HCT116 (cell line): ENCODE measurements at regions of chr1 and their contacts with region 1.

Region 1: DNA sequence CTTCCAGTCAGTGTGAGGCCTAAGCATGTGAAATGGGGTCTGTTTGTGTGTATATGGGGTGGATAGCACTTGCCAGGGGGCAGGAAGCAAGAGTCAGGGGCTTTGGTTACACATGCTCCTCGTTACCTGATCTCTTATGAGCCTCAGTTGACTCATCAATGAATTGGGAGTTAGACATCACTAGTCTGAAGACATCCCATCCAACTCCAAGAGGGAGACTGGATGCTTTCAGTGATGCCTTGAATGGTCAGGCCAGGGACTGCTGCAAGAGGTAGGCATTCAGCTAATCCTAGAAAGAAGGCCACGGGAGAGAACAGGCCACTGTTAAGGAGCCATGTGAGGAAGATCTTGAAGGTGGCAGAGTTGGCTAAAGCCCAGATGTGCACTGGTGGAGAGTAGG is 6.3 kb downstream of the RAB25 start:
- DNase-seq: no peak
- ATAC-seq: no peak
- H3K4me3 ChIP-seq: no peak overlapping the region
- H3K27ac ChIP-seq: no peak overlapping the region
- H3K4me1 ChIP-seq: peaks cover 0 to 8% of the 10 kb centered on the region in 2 experiments; a peak in 1 of 4 replicates
- H3K27me3 ChIP-seq: no peaks in the 10 kb centered on the region
- CTCF ChIP-seq: no peak
- POLR2A ChIP-seq: no peak
- RAD21 ChIP-seq: no peak

Region 2: DNA sequence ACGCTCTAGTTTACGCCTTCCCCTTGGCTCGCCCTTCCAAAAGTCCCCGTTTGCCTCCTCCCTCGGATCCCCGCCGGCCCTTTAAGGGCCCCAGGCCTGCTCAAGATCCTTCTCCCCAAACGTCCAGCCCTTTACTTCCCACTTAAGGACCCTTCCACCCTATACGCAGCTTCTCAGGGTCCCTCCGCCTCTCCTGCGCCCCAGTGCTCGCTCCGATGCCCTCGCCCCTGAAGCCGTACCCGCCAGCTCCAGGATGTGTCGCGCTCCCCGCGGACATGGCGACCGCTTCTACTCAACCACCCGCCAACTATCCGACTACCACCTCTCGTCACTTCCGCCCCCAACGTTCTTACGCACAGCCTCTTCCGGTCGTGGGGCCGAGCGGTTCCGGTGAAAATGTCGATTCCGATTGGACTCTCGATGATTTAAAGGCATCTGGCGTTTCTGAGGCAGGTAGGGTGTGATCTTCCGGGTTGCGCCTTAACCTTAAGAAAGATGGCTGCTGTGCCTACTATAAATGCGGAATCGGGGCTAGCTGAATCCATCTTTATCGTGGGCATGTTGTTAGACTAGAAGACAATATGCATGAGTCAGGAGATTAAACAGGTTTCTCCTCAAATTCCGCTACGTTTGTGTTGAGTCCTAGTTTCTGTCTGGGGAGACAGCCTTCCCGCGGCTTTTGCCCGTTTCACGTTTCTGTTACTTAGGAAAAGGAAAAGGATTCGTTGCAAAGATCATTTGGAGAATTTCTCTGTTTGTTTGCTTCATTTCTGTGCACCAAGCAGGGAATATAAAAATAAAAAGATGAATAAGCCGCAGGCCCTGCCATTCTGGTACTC is 132.9 kb before region 1 on chr1 and contains the start of gene KHDC4:
- CTCF ChIA-PET with region 1: interaction called, 31 read pairs
- POLR2A ChIA-PET with region 1: interaction called, 3 read pairs
- RAD21 ChIA-PET with region 1: interaction called in 1 of 2 experiments, 3 read pairs
- intact Hi-C with region 1: no loop called
- DNase-seq: peak; percentile 98
- ATAC-seq: peak; percentile 89
- H3K4me3 ChIP-seq: peak within 1 kb of the TSS; percentile 99
- H3K27ac ChIP-seq: peak within 1 kb of the TSS; percentile 67
- H3K4me1 ChIP-seq: peaks cover 23 to 42% of the 10 kb centered on the region in 2 experiments
- H3K27me3 ChIP-seq: no peaks in the 10 kb centered on the region
- CTCF ChIP-seq: 0 out of 6 replicates have a peak, but pooled peaks of 1 of the 3 experiments have one; percentile 6
- POLR2A ChIP-seq: peak; percentile 81
- RAD21 ChIP-seq: no peak
- total RNA-seq, gene KHDC4: 60.7 TPM

Region 3: GRCh38 chr1:155940531-155940992 is 126.7 kb before region 1 on chr1:
- CTCF ChIA-PET with region 1: interaction called, 31 read pairs
- POLR2A ChIA-PET with region 1: interaction called, 3 read pairs
- RAD21 ChIA-PET with region 1: interaction called, 3 read pairs
- intact Hi-C with region 1: loop called (anchors 1 kb)
- DNase-seq: no peak
- ATAC-seq: peak; percentile 68
- H3K4me3 ChIP-seq: peak overlapping the region; percentile 24 to 40
- H3K27ac ChIP-seq: peak overlapping the region; percentile 96
- H3K4me1 ChIP-seq: peaks cover 49 to 67% of the 10 kb centered on the region in 2 experiments
- H3K27me3 ChIP-seq: no peaks in the 10 kb centered on the region
- CTCF ChIP-seq: no peak
- POLR2A ChIP-seq: peak; percentile 31
- RAD21 ChIP-seq: no peak

Region 4: DNA sequence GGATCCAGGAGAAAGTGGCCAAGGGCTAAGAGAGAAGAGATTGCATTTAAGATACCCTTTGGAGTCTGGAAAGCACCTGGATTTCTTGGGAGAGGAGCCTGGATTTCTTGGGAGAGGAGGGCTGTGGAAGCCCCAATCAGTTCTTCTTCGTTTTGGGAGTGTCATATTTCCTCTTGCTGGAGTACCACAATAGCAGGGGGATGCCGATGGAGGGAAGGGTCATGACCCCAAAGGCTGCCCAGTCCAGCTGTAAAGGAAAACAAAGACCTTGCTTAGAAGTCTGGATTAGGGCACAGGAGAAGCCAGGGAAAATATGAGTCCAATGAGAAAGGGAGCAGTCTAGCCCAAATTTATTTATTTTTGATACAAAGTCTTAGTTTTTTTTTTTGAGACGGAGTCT is 57.9 kb before region 1 on chr1:
- CTCF ChIA-PET with region 1: interaction called, 14 read pairs
- POLR2A ChIA-PET with region 1: no interaction called
- RAD21 ChIA-PET with region 1: no interaction called
- intact Hi-C with region 1: loop called (anchors 10 kb)
- DNase-seq: no peak
- ATAC-seq: no peak
- H3K4me3 ChIP-seq: no peak overlapping the region
- H3K27ac ChIP-seq: no peak overlapping the region
- H3K4me1 ChIP-seq: peaks cover 2 to 21% of the 10 kb centered on the region in 2 experiments; a peak in 3 of 4 replicates
- H3K27me3 ChIP-seq: no peaks in the 10 kb centered on the region
- CTCF ChIP-seq: no peak
- POLR2A ChIP-seq: no peak
- RAD21 ChIP-seq: no peak

Region 5: GRCh38 chr1:156025877-156026276 is 41.4 kb before region 1 on chr1:
- CTCF ChIA-PET with region 1: interaction called, 14 read pairs
- POLR2A ChIA-PET with region 1: no interaction called
- RAD21 ChIA-PET with region 1: interaction called in 1 of 2 experiments, 3 read pairs
- intact Hi-C with region 1: loop called (anchors 1 kb)
- DNase-seq: peak; percentile 48
- ATAC-seq: peak; percentile 98
- H3K4me3 ChIP-seq: no peak overlapping the region
- H3K27ac ChIP-seq: no peak overlapping the region
- H3K4me1 ChIP-seq: peaks cover 4 to 13% of the 10 kb centered on the region in 2 experiments; a peak in 3 of 4 replicates
- H3K27me3 ChIP-seq: no peaks in the 10 kb centered on the region
- CTCF ChIP-seq: peak; percentile 73 to 93 (median 79)
- POLR2A ChIP-seq: no peak
- RAD21 ChIP-seq: peak; percentile 65

Region 6: GRCh38 chr1:156198831-156199349 is 131.6 kb after region 1 on chr1:
- CTCF ChIA-PET with region 1: no interaction called
- POLR2A ChIA-PET with region 1: no interaction called
- RAD21 ChIA-PET with region 1: no interaction called
- intact Hi-C with region 1: no loop called
- DNase-seq: no peak
- ATAC-seq: no peak
- H3K4me3 ChIP-seq: no peak overlapping the region
- H3K27ac ChIP-seq: no peak overlapping the region
- H3K4me1 ChIP-seq: peaks cover 3 to 15% of the 10 kb centered on the region in 2 experiments; a peak in 2 of 4 replicates
- H3K27me3 ChIP-seq: no peaks in the 10 kb centered on the region
- CTCF ChIP-seq: no peak
- POLR2A ChIP-seq: no peak
- RAD21 ChIP-seq: no peak

Region 7: DNA sequence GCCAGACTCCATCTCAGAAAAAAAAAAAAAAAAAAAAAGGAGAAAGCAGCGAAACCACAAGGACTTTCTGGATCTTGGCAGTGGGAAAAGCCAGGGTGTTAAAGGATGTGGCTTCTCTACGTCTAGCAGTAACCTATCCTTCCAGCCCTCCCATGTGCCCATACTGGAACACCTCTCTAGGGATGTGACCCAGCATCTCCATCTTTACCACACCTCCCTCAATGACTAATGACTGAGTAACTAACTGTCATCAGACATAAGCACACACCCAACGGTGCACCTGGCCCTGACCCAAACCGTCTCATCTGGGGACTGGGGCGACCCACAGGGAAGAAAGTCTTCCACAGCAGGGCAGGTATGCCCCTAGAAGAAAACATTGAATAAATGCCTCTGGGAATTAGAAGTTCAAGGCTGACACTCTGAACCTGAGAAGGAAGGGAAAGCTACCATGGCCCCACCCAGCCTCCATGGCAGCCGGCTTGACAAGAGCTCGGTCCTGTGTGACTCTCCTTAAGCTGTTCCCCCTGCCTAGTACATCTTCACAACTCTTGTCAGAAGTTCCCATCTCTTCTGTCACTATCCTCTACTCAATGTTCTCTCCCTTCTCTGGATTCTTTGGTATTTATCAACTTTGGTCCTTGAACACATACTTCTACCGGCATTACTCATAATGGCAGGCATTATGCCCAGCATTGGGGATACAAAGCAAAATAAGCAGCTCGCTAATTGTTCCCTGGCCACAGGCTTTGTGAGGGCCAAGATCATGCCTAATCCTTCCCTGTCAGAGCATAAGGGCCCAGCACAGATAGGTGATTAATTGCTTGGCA is 195.4 kb after region 1 on chr1:
- CTCF ChIA-PET with region 1: no interaction called
- POLR2A ChIA-PET with region 1: no interaction called
- RAD21 ChIA-PET with region 1: no interaction called
- intact Hi-C with region 1: no loop called
- DNase-seq: no peak
- ATAC-seq: peak; percentile 79
- H3K4me3 ChIP-seq: no peak overlapping the region
- H3K27ac ChIP-seq: 0 out of 2 replicates have a peak overlapping the region, but pooled peaks have one; percentile 10
- H3K4me1 ChIP-seq: peaks cover 0 to 16% of the 10 kb centered on the region in 2 experiments; a peak in 2 of 4 replicates
- H3K27me3 ChIP-seq: no peaks in the 10 kb centered on the region
- CTCF ChIP-seq: no peak
- POLR2A ChIP-seq: no peak
- RAD21 ChIP-seq: no peak